IMR-90 (cell line): ENCODE measurements at regions of chr1 and their contacts with region 1.

Region 1: DNA sequence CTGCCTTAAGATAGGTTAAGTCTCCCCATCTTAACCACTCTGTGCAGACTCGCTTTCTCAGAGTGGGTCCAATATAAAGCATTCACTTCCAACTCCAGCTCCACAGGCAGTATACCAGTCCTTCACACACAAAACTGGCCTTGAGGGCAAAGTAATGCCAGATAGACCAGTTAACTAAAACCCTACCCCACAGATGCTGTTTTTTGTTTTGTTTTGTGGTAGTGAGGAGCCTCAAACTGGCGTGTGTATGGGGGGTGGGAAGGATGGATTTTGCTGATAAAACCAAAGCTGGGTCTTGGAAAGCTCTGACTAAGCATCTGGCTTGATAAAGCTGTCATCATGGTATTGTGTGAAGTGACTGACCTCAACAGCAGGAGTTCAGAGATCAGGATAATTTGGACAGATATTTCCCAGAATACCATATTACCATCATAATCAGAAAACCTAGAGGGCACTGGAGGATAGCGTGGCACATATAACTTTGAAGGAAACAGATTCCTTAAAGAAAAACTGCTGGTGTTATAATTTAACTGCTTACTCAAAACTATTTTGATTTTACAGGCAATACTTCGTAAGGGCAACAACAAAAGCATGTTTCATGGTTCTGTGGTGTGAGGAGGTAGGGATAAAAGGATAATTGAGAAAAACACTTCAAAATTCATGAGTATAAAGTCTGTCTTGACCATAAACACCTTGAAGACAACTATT is 29.6 kb upstream of the CPLANE2 start:
- DNase-seq: peak; percentile 56
- ATAC-seq: peak; percentile 53
- H3K4me3 ChIP-seq: no peak overlapping the region
- H3K27ac ChIP-seq: peak overlapping the region; percentile 29; the same call in 1 of the 2 replicates
- H3K4me1 ChIP-seq: peaks cover 11% of the 10 kb centered on the region
- H3K27me3 ChIP-seq: no peaks in the 10 kb centered on the region
- CTCF ChIP-seq: no peak
- POLR2A ChIP-seq: no peak
- RAD21 ChIP-seq: no peak

Region 2: DNA sequence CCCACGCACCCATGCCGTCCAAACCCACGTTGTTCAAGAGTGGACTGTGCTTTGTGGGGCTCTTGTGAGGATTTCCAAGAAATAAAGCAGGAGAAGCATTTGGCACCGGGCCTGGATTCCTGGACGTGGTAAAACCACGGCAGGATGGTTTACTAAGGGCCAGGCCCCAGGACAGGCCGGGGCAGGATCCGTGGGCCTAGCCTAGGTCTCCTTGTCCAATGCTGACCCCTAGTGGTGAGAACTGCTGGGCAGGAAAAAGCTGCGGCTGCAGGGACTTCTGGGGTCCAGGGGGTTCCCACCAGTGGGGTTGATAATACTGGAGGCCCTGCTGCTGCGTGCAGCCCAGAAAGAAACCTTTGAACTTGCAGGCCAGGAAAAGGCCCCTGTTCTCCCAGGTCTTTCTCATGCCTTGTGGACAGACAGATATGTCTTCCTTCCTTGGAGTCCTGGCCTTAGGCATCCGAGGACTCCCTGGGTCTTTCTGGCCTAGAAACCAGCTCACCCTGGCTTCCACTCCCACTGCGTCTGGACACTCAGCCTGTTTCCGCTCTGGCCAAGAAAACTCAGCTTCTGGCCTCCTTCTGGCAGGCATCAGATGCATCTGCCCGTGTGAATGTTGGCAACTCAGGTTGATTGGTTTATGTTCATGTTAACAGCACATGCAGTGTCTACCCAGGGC is 1219.9 kb before region 1 on chr1:
- CTCF ChIA-PET with region 1: no interaction called
- POLR2A ChIA-PET with region 1: no interaction called
- dilution Hi-C with region 1: no loop called
- in situ Hi-C with region 1: no loop called
- intact Hi-C with region 1: no loop called
- DNase-seq: peak; percentile 81
- ATAC-seq: peak; percentile 97
- H3K4me3 ChIP-seq: no peak overlapping the region
- H3K27ac ChIP-seq: peak overlapping the region; percentile 62; the same call in 1 of the 2 replicates
- H3K4me1 ChIP-seq: peaks cover 2% of the 10 kb centered on the region; the same call in 1 of the 2 replicates
- H3K27me3 ChIP-seq: no peaks in the 10 kb centered on the region
- CTCF ChIP-seq: peak; percentile 95
- POLR2A ChIP-seq: peak; percentile 44; the same call in 1 of the 2 replicates
- RAD21 ChIP-seq: peak; percentile 98

Region 3: GRCh38 chr1:15584489-15585363 is 681.8 kb before region 1 on chr1 and contains the start of gene AGMAT:
- CTCF ChIA-PET with region 1: no interaction called
- POLR2A ChIA-PET with region 1: no interaction called
- dilution Hi-C with region 1: no loop called
- in situ Hi-C with region 1: no loop called
- intact Hi-C with region 1: no loop called
- DNase-seq: no peak
- ATAC-seq: peak; percentile 69
- H3K4me3 ChIP-seq: peak within 1 kb of the TSS; percentile 4; the same call in 1 of the 2 replicates
- H3K27ac ChIP-seq: no peak within 1 kb of the TSS
- H3K4me1 ChIP-seq: no peaks in the 10 kb centered on the region
- H3K27me3 ChIP-seq: no peaks in the 10 kb centered on the region; the same call in 1 of the 2 replicates
- CTCF ChIP-seq: 0 out of 2 replicates have a peak, but pooled peaks have one; percentile 19
- POLR2A ChIP-seq: no peak
- RAD21 ChIP-seq: no peak
- total RNA-seq, gene AGMAT: 0.18 and 0.28 TPM in 2 replicates

Region 4: DNA sequence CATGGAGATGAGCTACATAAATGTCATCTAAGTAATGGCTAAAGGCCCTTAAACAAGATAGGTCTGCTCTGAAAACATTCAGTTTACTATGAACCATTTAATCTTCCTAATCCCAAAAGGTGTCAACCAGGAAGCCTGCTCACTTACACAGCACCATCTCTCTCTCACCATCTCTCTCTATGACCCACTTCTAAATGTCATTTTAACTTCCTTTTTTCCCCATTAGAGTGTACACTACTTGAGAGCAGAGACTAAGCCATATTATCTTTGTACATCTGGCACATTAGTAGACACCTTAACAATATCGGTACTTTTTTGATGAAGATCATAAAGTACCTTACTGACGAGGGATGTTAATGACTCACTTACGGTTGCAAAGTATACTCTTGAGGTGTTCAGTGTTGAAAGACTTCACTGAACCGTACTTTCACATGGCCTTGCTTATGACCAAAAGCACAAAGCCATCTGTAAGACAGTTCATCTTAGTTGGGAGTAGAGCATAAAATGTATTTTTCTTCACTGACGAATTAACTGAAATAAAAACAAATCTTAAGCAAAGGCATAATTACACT is 60.4 kb after region 1 on chr1:
- CTCF ChIA-PET with region 1: no interaction called
- POLR2A ChIA-PET with region 1: no interaction called
- dilution Hi-C with region 1: no loop called
- in situ Hi-C with region 1: no loop called
- intact Hi-C with region 1: no loop called
- DNase-seq: no peak
- ATAC-seq: no peak
- H3K4me3 ChIP-seq: no peak overlapping the region
- H3K27ac ChIP-seq: no peak overlapping the region
- H3K4me1 ChIP-seq: peaks cover 2% of the 10 kb centered on the region
- H3K27me3 ChIP-seq: no peaks in the 10 kb centered on the region
- CTCF ChIP-seq: no peak
- POLR2A ChIP-seq: no peak
- RAD21 ChIP-seq: no peak

Region 5: DNA sequence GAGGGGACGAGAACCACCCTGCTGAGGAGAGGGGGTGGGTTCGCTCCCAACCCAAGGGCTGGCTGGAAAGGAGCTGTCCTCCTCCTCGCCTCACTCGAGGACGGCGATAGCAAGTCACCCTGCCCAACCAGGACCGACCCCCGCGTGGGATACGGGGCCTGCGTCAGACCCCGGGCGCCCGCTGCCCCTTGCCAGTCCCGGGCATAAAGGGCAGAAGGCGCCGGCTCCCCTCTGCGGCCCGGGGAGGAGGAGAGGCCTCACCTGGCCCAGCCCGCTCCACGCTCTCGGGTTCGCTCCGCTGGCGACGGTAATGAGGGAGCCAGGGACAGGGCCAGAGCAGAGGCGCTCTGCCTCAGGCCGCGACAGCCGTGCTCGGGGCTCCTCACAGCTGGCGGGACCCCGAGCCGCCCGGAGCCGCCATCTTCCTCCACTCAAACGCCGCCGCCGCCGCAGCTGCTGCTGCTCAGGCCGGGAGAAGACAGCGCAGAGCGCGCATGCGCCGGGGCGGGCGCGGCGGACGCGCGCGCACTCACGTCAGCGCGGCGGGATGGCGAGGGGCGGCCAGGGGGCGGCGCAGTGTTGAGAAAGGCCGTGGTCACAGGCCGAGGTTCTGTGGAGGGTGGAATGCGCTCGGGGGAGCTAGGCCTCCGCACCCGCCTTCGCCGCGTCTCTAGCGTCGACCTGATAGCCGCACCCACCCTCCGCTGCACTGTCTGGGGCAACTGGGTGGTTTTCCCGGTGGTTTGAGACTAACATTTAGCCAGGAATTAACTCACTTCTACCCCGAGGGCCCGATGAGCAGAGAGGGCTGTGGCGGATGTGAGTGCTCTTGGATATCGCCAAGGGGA is 85.7 kb after region 1 on chr1 and contains the start of gene FBXO42:
- CTCF ChIA-PET with region 1: no interaction called
- POLR2A ChIA-PET with region 1: no interaction called
- dilution Hi-C with region 1: no loop called
- in situ Hi-C with region 1: no loop called
- intact Hi-C with region 1: loop called (anchors 10 kb)
- DNase-seq: peak; percentile 89
- ATAC-seq: peak; percentile 94
- H3K4me3 ChIP-seq: peak within 1 kb of the TSS; percentile 77
- H3K27ac ChIP-seq: peak within 1 kb of the TSS; percentile 90
- H3K4me1 ChIP-seq: peaks cover 9% of the 10 kb centered on the region
- H3K27me3 ChIP-seq: no peaks in the 10 kb centered on the region
- CTCF ChIP-seq: peak; percentile 57
- POLR2A ChIP-seq: peak; percentile 79
- RAD21 ChIP-seq: peak; percentile 34
- total RNA-seq, gene FBXO42: 11.4 and 12.0 TPM in 2 replicates